GM10248 (cell line): ENCODE measurements at regions of chr2 and their contacts with region 1.

Region 1: DNA sequence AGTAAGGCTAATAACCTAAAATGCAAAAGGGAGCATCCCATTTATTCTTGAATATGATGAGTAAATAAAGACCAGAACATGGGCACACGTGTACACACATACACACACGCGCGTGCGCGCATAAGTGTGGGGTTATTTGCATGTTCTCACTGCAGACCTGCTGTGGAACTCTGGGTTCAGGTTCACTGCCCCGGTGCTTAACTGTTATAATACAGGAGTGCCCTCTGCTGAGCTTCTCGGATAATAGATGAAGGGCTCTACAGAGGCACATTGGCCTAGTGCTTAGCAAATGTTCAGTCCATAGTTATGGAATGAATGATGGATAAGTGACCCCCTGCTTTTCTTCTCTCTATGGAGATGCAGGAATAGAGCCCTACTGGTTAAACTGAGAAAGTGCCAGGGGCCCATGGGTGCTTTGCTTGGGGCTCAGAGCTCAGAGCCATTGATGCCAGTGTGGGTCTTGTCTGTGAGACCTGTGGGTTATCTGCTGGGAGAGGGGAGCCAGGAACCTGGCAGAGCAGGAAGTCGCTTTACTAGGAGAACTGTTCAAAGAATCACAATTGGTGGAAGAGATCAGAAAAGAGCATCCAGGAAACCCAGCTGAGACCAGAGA is 3.6 kb upstream of the ARL4C start:
- DNase-seq: peak; percentile 61
- CTCF ChIP-seq: peak; percentile 58

Region 2: DNA sequence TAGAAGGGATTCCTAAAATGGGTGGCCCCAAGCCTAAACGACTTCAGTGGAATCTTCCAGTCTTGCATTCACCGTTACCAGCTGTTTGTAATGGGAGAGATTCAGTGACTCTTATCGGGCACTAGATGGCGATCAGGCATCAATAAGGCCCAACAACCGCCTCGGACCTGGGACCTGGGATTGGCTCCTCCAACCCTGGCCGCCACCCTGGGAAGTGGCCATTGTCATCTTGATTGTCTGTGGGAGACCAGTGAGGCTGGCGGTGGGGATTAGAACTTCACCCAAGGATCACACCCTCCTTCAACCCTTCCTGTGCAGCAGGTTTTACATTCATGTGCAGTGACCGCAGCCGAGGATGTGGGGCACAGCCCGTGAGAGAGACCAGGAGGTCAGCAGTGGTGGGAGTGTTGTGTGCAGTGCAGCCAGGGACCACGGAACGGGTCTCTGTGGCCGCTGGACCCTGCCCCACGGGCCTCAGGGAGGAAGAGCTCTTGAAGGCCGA is 364.7 kb before region 1 on chr2:
- CTCF ChIA-PET with region 1: interaction called, 27 read pairs
- POLR2A ChIA-PET with region 1: no interaction called
- DNase-seq: peak; percentile 68
- CTCF ChIP-seq: peak; percentile 65